Activated CD4-positive, alpha-beta T cell treated with anti-CD3 and anti-CD28 coated beads for 36 hours (primary cell): ENCODE measurements at regions of chr2 and their contacts with region 1.

Region 1: GRCh38 chr2:7672027-7672684 is 754.9 kb downstream of the RNF144A start:
- DNase-seq: peak; percentile 80
- ATAC-seq: peak; percentile 76
- H3K4me3 Mint-ChIP-seq: peak overlapping the region; percentile 48
- H3K27ac Mint-ChIP-seq: peak overlapping the region; percentile 96
- H3K4me1 Mint-ChIP-seq: peaks cover 55% of the 10 kb centered on the region
- H3K27me3 Mint-ChIP-seq: no peaks in the 10 kb centered on the region

Region 2: DNA sequence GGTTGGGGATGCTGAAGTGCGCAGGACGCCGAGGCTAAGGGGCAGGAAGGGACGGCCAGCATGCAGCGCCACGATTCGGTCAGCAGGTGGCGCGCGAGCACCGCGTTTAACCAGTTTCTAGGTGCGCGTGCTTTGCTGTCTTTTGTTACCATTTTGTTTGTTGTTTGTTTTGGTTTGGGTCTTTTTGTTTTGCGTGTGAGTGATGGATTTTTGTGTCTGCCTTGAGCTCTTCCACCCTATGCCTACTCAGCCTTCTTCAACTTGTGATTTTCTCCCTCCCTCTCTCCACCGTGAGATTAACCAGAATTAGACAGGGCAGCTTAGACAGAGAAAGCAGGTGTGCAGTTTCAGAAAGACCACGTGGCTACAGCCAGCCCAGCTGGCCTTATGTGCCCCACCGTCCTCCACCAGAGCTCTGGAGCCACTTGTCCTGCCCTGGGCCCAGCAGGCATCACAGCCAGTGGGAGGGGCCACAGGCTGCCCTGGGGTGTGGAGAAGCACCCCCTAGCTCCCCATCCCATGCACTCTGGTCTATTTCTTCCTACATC is 574.7 kb before region 1 on chr2:
- CTCF ChIA-PET with region 1: no interaction called
- POLR2A ChIA-PET with region 1: no interaction called
- intact Hi-C with region 1: loop called in 1 of 2 experiments (anchors 5 kb)
- DNase-seq: peak; percentile 86
- ATAC-seq: peak; percentile 95
- H3K4me3 Mint-ChIP-seq: peak overlapping the region; percentile 39
- H3K27ac Mint-ChIP-seq: peak overlapping the region; percentile 27
- H3K4me1 Mint-ChIP-seq: peaks cover 6% of the 10 kb centered on the region
- H3K27me3 Mint-ChIP-seq: no peaks in the 10 kb centered on the region

Region 3: DNA sequence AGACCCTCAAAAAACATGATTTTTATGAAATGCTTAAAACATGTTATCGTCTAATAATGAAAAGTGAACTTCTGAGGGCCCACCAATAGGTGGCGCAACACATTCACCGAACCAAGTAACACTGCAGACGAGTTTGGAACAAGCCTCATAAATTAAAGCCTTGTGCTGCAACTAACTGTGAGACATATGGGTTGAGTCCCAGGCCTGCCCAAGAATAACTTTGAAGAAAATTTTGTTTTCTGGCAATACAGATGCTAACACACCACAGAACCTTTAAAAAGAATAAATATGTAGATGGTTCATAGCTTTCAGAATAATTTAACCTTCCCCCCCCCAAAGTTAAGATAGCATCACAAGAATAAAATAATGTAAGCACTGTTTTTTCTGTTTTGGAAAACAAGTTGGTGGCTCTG is 469.1 kb before region 1 on chr2:
- CTCF ChIA-PET with region 1: no interaction called
- POLR2A ChIA-PET with region 1: no interaction called
- intact Hi-C with region 1: loop called in 1 of 2 experiments (anchors 5 kb)
- DNase-seq: peak; percentile 78
- ATAC-seq: peak; percentile 55
- H3K4me3 Mint-ChIP-seq: no peak overlapping the region
- H3K27ac Mint-ChIP-seq: no peak overlapping the region
- H3K4me1 Mint-ChIP-seq: peaks cover 1% of the 10 kb centered on the region
- H3K27me3 Mint-ChIP-seq: no peaks in the 10 kb centered on the region

Region 4: DNA sequence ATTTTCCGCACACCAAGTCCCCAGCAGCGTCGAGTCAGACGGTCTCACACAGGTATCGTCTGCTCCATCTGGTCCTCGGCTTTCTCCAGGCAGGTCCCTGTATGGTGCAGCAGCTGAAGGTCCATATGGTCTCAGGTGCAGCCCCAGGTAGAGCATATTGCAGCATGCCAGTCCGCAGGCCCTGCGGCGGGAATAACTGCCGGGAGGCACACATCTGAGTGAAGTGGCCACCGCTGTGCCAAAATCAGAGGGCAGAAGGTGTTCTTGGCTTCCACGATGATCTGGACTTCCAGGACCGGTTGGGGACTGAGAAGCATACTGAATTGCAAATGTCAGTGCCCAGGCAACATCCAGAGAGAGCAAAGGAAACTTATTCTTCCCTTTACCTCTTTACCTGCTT is 434.7 kb before region 1 on chr2:
- CTCF ChIA-PET with region 1: no interaction called
- POLR2A ChIA-PET with region 1: no interaction called
- intact Hi-C with region 1: no loop called
- DNase-seq: no peak
- ATAC-seq: no peak
- H3K4me3 Mint-ChIP-seq: no peak overlapping the region
- H3K27ac Mint-ChIP-seq: no peak overlapping the region
- H3K4me1 Mint-ChIP-seq: peaks cover 4% of the 10 kb centered on the region
- H3K27me3 Mint-ChIP-seq: no peaks in the 10 kb centered on the region

Region 5: DNA sequence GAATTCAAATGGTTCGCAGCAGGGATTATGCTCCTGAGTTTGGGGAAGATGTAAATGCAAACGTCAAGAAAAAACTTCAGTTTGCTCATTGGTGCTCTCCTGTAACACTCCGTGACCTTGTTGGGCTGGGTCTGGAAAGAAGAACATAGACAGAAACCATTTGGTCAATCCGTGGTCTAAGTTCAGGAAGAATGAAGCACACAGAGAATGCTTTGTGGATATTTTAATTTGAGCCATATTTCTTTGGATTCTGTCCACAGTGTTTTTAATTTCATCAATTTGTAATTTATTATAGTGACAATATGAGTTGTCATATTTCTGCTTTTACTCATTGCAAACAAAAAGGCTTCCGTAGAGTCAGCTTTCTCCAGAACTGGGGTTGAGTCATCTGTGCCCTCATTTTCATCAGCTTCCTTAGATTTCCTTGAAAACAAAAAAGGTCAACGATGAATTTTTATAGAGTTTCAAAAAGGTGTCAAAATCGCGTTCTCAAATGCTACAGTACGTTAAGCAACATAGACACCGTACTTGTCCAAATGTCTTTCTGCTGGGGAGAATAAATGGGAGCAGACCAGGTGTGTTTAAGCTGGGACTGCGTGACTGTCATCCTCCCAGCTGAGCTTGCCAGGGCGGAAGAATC is 148.6 kb before region 1 on chr2:
- CTCF ChIA-PET with region 1: no interaction called
- POLR2A ChIA-PET with region 1: no interaction called
- intact Hi-C with region 1: loop called (anchors 2 to 5 kb)
- DNase-seq: peak; percentile 27
- ATAC-seq: peak; percentile 51
- H3K4me3 Mint-ChIP-seq: peak overlapping the region; percentile 46
- H3K27ac Mint-ChIP-seq: peak overlapping the region; percentile 92
- H3K4me1 Mint-ChIP-seq: peaks cover 57% of the 10 kb centered on the region
- H3K27me3 Mint-ChIP-seq: no peaks in the 10 kb centered on the region

Region 6: GRCh38 chr2:7661477-7661876 is 10.7 kb before region 1 on chr2:
- CTCF ChIA-PET with region 1: interaction called, 11 read pairs
- POLR2A ChIA-PET with region 1: no interaction called
- intact Hi-C with region 1: no loop called
- DNase-seq: no peak
- ATAC-seq: no peak
- H3K4me3 Mint-ChIP-seq: no peak overlapping the region
- H3K27ac Mint-ChIP-seq: no peak overlapping the region
- H3K4me1 Mint-ChIP-seq: peaks cover 15% of the 10 kb centered on the region
- H3K27me3 Mint-ChIP-seq: no peaks in the 10 kb centered on the region

Region 7: DNA sequence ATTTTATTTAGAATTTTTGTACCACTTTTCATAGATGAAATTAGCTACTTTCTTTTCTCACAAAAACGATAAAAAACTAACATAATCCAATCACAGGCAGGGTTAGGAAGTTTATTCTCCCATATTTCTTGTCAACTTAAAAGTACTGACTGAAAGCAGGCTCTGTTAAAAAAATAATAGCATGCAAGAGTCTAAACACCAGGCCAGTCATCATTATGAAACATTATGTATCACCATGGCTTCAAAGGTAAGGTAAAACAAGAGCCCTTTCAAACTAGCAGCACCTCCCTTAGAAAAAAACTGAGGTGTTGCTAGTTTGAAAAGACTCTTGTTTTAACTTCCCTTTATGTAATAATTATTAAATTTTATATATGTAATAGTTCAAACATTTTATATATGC is 93.1 kb after region 1 on chr2:
- CTCF ChIA-PET with region 1: no interaction called
- POLR2A ChIA-PET with region 1: no interaction called
- intact Hi-C with region 1: no loop called
- DNase-seq: no peak
- ATAC-seq: no peak
- H3K4me3 Mint-ChIP-seq: no peak overlapping the region
- H3K27ac Mint-ChIP-seq: no peak overlapping the region
- H3K4me1 Mint-ChIP-seq: peaks cover 5% of the 10 kb centered on the region
- H3K27me3 Mint-ChIP-seq: peaks cover 5% of the 10 kb centered on the region

Region 8: GRCh38 chr2:7795778-7796563 is 123.8 kb after region 1 on chr2:
- CTCF ChIA-PET with region 1: no interaction called
- POLR2A ChIA-PET with region 1: no interaction called
- intact Hi-C with region 1: no loop called
- DNase-seq: no peak
- ATAC-seq: peak; percentile 39
- H3K4me3 Mint-ChIP-seq: no peak overlapping the region
- H3K27ac Mint-ChIP-seq: peak overlapping the region; percentile 89
- H3K4me1 Mint-ChIP-seq: peaks cover 9% of the 10 kb centered on the region
- H3K27me3 Mint-ChIP-seq: no peaks in the 10 kb centered on the region

Region 9: DNA sequence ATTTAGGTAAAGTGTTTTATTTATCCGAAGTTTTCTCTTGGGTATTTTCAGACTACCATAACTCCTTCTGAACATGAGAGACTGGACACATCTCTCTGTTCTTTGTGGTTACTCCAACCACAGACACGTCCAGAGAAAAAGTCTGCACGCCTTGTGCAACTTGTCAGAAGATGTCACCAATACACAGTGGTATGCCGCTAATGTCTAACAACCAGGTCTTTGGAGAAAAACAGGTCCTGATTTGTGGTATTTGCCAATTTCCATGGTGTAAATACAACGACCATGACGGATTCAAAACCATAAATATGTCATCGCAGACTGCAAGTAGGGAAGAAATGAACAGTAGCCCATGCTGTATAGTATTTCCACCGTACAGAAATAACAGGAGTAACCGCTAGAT is 389.1 kb after region 1 on chr2:
- CTCF ChIA-PET with region 1: no interaction called
- POLR2A ChIA-PET with region 1: no interaction called
- intact Hi-C with region 1: no loop called
- DNase-seq: no peak
- ATAC-seq: no peak
- H3K4me3 Mint-ChIP-seq: no peak overlapping the region
- H3K27ac Mint-ChIP-seq: no peak overlapping the region
- H3K4me1 Mint-ChIP-seq: peaks cover 14% of the 10 kb centered on the region
- H3K27me3 Mint-ChIP-seq: no peaks in the 10 kb centered on the region